ENCODE measurements at regions of chr12 and their contacts with region 1.

Region 1: DNA sequence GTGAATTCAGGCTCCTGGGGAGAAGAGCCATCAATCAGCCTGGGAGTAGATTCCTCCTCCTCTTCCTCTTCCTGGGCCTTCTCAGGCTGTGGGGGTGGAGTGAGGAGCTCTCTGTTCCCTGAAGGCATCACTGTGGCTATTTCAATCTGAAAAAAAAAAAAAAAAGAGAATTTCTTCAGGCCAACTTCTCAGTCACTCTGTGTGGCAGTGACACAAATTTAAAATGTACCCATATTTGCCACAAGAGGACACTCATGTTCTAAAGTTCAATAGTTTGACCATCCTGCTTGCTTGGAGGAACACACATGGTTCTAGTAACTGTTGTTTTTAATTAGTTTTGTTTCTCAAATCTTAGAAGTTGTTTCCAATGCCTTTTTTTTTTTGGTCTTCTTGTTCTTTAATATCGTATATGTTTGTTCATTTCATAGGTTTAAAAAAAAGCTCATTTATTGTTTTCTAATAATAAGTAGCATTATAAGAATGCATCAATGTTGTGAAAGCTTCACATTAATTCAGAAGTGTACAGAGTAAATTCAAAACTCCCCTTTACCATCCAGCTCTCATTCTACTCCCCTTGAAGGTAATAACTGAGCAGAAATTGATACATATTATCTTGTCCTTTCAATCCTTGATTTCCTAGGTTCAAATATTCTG is 23.3 kb upstream of the CCER1 start:
- DNase-seq: peak; percentile 47 to 76 (median 76)
- H3K4me3 ChIP-seq: no peak overlapping the region
- H3K27ac ChIP-seq: no peak overlapping the region
- H3K4me1 ChIP-seq: no peaks in the 10 kb centered on the region
- H3K27me3 ChIP-seq: no peaks in the 10 kb centered on the region

Region 2: DNA sequence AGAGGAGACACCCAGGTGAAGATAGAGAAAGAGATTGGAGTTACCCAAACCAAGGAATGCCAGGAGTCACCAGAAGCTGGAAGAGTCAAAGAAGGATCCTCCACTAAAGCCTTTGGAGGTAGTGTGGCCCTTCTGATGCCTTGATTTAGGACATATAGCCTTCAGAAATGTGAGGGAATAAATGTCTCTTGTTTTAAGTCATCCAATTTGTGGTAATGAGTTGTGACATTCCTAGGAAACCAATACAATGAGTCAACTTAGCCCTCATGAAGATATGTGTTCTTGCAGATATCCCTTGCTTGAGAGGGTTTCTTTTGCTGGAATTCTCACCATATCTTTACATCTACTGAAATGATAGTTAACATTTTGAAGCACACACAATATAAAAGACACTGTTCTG is 82.1 kb before region 1 on chr12:
- CTCF ChIA-PET with region 1: no interaction called
- POLR2A ChIA-PET with region 1: no interaction called
- DNase-seq: no peak
- H3K4me3 ChIP-seq: no peak overlapping the region
- H3K27ac ChIP-seq: no peak overlapping the region
- H3K4me1 ChIP-seq: no peaks in the 10 kb centered on the region
- H3K27me3 ChIP-seq: no peaks in the 10 kb centered on the region

Region 3: GRCh38 chr12:90922145-90922627 is 56.1 kb before region 1 on chr12:
- CTCF ChIA-PET with region 1: no interaction called
- POLR2A ChIA-PET with region 1: no interaction called
- DNase-seq: no peak
- H3K4me3 ChIP-seq: no peak overlapping the region
- H3K27ac ChIP-seq: no peak overlapping the region
- H3K4me1 ChIP-seq: no peaks in the 10 kb centered on the region
- H3K27me3 ChIP-seq: no peaks in the 10 kb centered on the region

Region 4: GRCh38 chr12:91339106-91339505 is 360.9 kb after region 1 on chr12:
- CTCF ChIA-PET with region 1: no interaction called
- POLR2A ChIA-PET with region 1: no interaction called
- DNase-seq: no peak
- H3K4me3 ChIP-seq: no peak overlapping the region
- H3K27ac ChIP-seq: no peak overlapping the region
- H3K4me1 ChIP-seq: no peaks in the 10 kb centered on the region
- H3K27me3 ChIP-seq: peaks cover 0 to 2% (median 0%) of the 10 kb centered on the region in 5 experiments

Region 5: DNA sequence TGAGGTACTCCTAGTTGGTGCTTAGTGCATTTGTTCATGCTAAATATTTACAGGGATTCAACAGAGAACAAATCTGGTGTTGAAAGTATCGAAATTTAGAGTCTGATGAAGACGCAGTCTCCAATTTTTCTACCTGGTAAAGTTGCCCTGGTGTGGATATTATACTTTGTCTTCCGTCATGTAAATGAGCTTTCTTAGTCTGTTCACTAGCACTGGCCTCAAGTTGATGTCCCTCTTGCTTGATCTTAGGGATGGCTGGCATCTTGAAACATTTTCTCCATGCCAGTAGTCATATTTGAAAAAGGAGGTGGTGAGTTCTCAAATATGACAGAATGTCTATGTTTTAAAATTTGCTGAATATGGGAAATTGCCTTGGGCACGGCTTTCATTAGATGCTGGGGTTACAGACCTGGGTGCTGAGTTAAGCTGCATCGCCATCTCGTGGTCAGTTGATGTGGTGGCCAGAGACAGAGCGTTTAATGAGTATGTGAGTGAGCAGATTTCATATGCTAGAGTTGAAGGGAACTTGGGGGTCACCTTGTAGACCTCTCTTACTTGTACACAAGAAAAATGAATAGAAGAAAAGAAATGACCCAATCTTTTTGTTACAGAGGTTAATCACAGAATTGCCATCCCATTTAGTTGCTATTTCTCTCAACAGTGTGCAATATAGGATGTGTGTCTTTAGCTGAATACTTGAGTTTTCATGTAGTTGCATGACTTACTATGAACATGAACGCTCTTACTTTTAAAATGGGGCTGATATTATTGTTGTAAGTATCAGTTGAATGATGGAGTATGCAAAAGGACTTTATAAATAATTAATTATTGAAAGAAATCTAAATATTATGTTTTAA is 377.1 kb after region 1 on chr12:
- CTCF ChIA-PET with region 1: interaction called, 14 read pairs
- POLR2A ChIA-PET with region 1: no interaction called
- DNase-seq: peak; percentile 63 to 78 (median 73)
- H3K4me3 ChIP-seq: no peak overlapping the region
- H3K27ac ChIP-seq: no peak overlapping the region
- H3K4me1 ChIP-seq: no peaks in the 10 kb centered on the region
- H3K27me3 ChIP-seq: no peaks in the 10 kb centered on the region